ENCODE measurements at regions of chr1 and their contacts with region 1.

Region 1: GRCh38 chr1:206824331-206824730 is 41.1 kb upstream of the IL20 start:
- DNase-seq: no peak
- H3K4me3 Mint-ChIP-seq: no peak overlapping the region
- H3K27ac Mint-ChIP-seq: no peak overlapping the region
- H3K4me1 Mint-ChIP-seq: peaks cover 34% of the 10 kb centered on the region
- H3K27me3 Mint-ChIP-seq: no peaks in the 10 kb centered on the region

Region 2: DNA sequence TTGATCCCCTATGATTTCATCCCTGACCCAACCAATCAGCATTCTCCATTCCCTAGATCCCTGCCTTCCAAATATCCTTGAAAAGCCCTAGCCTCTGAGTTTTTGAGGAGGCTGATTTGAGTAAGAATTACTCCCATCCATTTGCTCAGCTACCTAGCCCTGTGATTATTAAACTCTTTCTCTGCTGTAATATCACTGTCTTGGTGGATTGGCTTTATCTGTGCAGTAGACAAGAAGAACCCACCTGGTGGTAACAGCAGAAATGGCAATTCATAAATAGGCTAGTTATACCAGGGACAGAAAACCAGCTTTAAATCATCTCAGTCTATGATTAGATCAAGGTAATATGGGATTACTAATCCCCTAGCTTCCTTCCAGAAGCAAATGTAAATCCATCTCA is 54.1 kb after region 1 on chr1:
- intact Hi-C with region 1: loop called (anchors 5 kb)
- DNase-seq: no peak
- H3K4me3 Mint-ChIP-seq: no peak overlapping the region
- H3K27ac Mint-ChIP-seq: no peak overlapping the region
- H3K4me1 Mint-ChIP-seq: no peaks in the 10 kb centered on the region
- H3K27me3 Mint-ChIP-seq: peaks cover 6% of the 10 kb centered on the region

Measured in activated T-helper 2 cell treated with anti-CD3 and anti-CD28 coated beads, Interferon-gamma antibody, Interleukin-2, Interleukin-4, amounts not matched to agents 10 μg/mL and 5 μg/mL and 100 μg/mL, durations not matched to agents 14 hours and 24 hours and 36 hours (primary cell).